ENCODE measurements at regions of chr3 and their contacts with region 1.

Region 1: DNA sequence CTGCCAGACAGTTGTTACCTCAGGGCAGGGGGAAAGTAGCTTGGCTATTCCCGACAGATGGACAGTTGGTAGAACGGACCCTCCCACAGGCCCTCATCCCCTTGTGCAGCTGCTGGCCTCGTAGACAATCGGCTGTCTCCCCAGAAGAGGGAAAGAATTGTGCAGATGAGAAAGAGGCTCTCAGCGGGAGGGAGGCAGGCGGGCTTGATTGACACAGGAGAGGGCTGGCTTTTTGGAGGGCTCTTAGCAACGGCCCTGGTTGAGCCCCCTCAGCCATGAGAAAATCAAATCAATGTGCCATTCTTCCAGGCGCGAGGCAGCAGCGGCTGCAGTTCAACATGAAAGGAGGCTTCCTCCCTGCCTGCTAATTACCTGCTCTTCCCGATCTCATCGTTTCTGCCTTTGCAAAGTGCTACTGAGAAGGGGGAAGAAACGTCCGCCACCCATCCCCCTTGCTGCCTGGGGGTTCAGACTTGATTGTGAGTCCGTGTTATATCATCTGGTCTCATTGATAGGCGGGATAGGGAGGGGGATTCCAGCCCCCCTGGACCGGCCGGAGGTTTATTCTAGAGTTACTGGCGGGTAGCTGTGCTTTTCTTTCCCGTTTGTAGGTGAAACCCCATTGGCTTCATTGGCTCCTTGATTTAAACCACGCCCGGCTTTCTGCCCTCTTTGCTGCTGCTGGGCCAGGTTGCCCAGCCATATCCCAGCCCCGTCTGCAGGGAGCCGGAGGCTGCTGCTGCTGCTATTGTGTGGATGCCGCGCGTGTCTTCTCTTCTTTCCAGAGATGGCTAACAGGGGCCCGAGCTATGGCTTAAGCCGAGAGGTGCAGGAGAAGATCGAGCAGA is at the start of gene TAGLN3:
- DNase-seq: peak; percentile 26
- H3K4me3 ChIP-seq: peak within 1 kb of the TSS in 3 of 4 donors; percentile 21 to 43 (median 28)
- H3K27ac ChIP-seq: no peak within 1 kb of the TSS
- H3K4me1 ChIP-seq: peaks cover 0 to 13% (median 9%) of the 10 kb centered on the region in 4 donors
- H3K27me3 ChIP-seq: peaks cover 23% of the 10 kb centered on the region
- CTCF ChIP-seq: no peak
- EP300 ChIP-seq: no peak
- POLR2A ChIP-seq: no peak
- total RNA-seq, gene TAGLN3: 0.64 to 1.5 (median 0.68) TPM in 3 of 4 donors, not detected in the other

Region 2: GRCh38 chr3:111080413-111080812 is 918.4 kb before region 1 on chr3:
- in situ Hi-C with region 1: no loop called
- intact Hi-C with region 1: loop called (anchors 5 kb)
- DNase-seq: no peak
- H3K4me3 ChIP-seq: no peak overlapping the region
- H3K27ac ChIP-seq: no peak overlapping the region
- H3K4me1 ChIP-seq: peaks cover 5 to 52% (median 15%) of the 10 kb centered on the region in 4 donors
- H3K27me3 ChIP-seq: no peaks in the 10 kb centered on the region
- CTCF ChIP-seq: peak; percentile 34 to 50 (median 49)
- EP300 ChIP-seq: no peak
- POLR2A ChIP-seq: no peak

Region 3: GRCh38 chr3:111944377-111944776 is 54.5 kb before region 1 on chr3:
- in situ Hi-C with region 1: no loop called
- intact Hi-C with region 1: loop called (anchors 2 kb)
- DNase-seq: no peak
- H3K4me3 ChIP-seq: no peak overlapping the region
- H3K27ac ChIP-seq: no peak overlapping the region
- H3K4me1 ChIP-seq: peaks cover 0 to 6% (median 0%) of the 10 kb centered on the region in 4 donors
- H3K27me3 ChIP-seq: no peaks in the 10 kb centered on the region
- CTCF ChIP-seq: no peak
- EP300 ChIP-seq: no peak
- POLR2A ChIP-seq: no peak

Measured in transverse colon (tissue), 4 donors.